Endothelial cell of umbilical vein (primary cell): ENCODE measurements at regions of chr13 and their contacts with region 1.

Region 1: DNA sequence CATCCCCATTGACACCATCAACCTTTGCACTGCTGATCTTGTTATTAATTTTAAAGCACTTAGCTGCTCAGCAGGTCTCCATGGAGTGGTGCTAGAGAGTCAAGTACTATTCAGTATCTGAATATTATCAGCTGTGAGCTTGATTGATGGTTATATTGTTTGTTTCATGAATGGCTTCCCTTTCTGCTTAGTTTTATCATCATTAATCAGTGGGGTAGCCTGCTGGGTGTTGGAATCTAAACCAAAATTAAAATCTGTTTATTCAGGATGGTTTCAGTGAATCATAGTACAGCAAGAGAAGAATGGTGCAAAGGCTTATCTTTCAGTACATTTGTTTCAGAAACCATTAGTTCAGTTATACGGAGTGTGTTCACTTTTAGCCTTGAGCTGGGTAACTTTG is 42.5 kb upstream of the SCEL start:
- DNase-seq: peak; percentile 96
- H3K4me3 ChIP-seq: no peak overlapping the region
- H3K27ac ChIP-seq: no peak overlapping the region
- H3K4me1 ChIP-seq: peaks cover 9% of the 10 kb centered on the region
- H3K27me3 ChIP-seq: peaks cover 2 to 12% of the 10 kb centered on the region in 2 experiments
- CTCF ChIP-seq: peak; percentile 44 to 60
- POLR2A ChIP-seq: peak; percentile 35

Region 2: DNA sequence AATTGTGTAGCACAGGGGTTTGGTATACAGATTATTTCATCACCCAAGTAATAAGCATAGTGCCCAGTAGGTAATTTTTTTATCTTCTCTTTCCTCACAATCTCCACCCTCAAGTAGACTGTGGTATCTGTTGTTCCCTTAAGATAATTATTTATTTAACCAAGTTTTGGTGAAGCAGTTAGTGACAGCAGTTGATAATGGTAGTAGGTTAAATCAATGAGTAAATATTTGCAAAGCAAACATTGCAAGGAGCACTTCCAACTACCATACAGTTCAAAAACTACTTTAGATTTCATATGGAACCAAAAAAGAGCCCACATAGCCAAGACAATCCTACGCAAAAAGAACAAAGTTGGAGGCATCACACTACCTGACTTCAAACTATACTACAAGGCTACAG is 898.5 kb before region 1 on chr13:
- CTCF ChIA-PET with region 1: no interaction called
- POLR2A ChIA-PET with region 1: no interaction called
- dilution Hi-C with region 1: no loop called
- intact Hi-C with region 1: no loop called
- DNase-seq: no peak
- H3K4me3 ChIP-seq: no peak overlapping the region
- H3K27ac ChIP-seq: no peak overlapping the region
- H3K4me1 ChIP-seq: no peaks in the 10 kb centered on the region
- H3K27me3 ChIP-seq: no peaks in the 10 kb centered on the region
- CTCF ChIP-seq: no peak
- POLR2A ChIP-seq: no peak

Region 3: GRCh38 chr13:77409412-77409811 is 83.6 kb before region 1 on chr13:
- CTCF ChIA-PET with region 1: no interaction called
- POLR2A ChIA-PET with region 1: no interaction called
- dilution Hi-C with region 1: no loop called
- intact Hi-C with region 1: no loop called
- DNase-seq: no peak
- H3K4me3 ChIP-seq: no peak overlapping the region
- H3K27ac ChIP-seq: no peak overlapping the region
- H3K4me1 ChIP-seq: no peaks in the 10 kb centered on the region
- H3K27me3 ChIP-seq: no peaks in the 10 kb centered on the region
- CTCF ChIP-seq: no peak
- POLR2A ChIP-seq: no peak

Region 4: DNA sequence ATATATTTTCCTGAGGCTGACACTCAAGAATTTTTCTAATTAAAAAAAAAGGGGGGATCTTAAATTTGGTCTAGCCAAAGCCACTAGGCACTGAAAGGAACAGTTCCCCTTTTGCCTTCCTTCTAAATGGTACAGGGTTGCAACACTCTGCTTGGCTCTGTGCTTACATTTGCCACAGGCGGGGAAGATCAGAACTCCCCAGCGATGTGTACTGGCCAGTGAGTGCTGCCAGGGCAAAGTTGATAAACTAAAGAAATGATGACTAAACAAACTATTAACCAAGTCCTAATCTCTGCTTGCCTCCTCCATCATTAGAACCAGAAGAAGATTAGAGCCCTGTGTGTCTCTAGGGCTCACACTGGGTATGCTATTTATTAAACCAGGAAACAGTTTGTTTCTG is 32.8 kb before region 1 on chr13:
- CTCF ChIA-PET with region 1: no interaction called
- POLR2A ChIA-PET with region 1: no interaction called
- dilution Hi-C with region 1: no loop called
- intact Hi-C with region 1: no loop called
- DNase-seq: no peak
- H3K4me3 ChIP-seq: no peak overlapping the region
- H3K27ac ChIP-seq: no peak overlapping the region
- H3K4me1 ChIP-seq: no peaks in the 10 kb centered on the region
- H3K27me3 ChIP-seq: peaks cover 2 to 3% of the 10 kb centered on the region in 2 experiments
- CTCF ChIP-seq: no peak
- POLR2A ChIP-seq: no peak

Region 5: DNA sequence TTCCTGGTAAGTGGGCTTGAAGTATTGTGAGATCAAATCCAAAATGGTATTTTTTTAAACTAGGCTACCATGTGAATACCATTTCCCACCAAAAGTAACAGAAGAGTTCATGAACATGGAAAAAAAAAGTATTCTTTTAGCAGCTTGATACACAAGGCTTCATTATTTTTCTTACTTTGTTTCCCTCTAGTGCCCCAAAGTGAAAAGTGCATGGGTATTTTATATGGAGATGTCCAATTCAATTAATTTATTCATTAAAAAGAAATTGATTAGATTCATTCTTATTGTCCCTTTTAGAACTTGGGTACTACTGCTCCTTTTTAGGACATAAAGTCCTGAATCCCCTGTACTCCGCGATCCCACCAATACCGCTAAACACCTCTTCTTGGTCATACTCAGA is 13.9 kb after region 1 on chr13:
- CTCF ChIA-PET with region 1: interaction called, 72 read pairs
- POLR2A ChIA-PET with region 1: no interaction called
- dilution Hi-C with region 1: no loop called
- intact Hi-C with region 1: loop called (anchors 1 kb)
- DNase-seq: peak; percentile 58
- H3K4me3 ChIP-seq: no peak overlapping the region
- H3K27ac ChIP-seq: no peak overlapping the region
- H3K4me1 ChIP-seq: peaks cover 29% of the 10 kb centered on the region
- H3K27me3 ChIP-seq: peaks cover 4 to 5% of the 10 kb centered on the region in 2 experiments
- CTCF ChIP-seq: peak; percentile 3 to 17
- POLR2A ChIP-seq: no peak

Region 6: DNA sequence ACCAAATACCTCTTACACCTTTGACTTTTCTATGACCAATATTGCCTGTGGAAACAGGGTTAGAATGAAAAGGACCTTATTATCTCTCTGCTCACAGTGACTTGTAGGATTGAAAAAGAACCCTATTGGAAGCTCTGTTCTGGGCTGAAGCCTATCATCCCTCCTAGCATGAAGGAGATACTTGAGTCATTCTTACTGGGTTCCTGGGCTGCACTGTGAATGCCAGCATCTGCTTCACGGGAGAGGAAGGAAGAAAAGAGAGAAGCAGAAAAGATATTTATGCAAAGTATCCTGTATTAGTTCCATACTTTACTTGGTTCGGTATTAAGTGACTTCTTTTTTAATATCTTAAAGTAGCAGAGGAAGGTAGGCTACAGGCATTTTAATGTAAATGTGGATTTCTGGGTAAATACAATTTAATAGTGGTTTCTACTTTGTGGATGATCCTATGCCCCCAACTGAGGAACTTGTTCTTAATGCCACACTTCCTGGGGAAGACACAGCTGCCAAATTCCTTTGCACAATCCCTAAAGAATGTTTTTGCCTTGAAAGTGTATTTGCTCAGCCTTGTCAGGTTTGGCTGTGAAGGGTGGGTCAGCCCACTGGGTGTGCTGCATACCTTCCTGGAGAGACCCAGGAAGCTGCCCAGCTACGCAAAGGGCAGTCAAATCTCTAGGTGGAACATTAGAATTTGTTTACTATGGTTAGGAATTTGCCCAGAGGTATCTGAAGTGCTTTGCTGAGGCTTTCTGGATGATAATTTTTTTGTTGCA is 28.8 kb after region 1 on chr13:
- CTCF ChIA-PET with region 1: interaction called, 18 read pairs
- POLR2A ChIA-PET with region 1: no interaction called
- dilution Hi-C with region 1: no loop called
- intact Hi-C with region 1: no loop called
- DNase-seq: peak; percentile 58
- H3K4me3 ChIP-seq: no peak overlapping the region
- H3K27ac ChIP-seq: peak overlapping the region; percentile 59
- H3K4me1 ChIP-seq: peaks cover 39% of the 10 kb centered on the region
- H3K27me3 ChIP-seq: no peaks in the 10 kb centered on the region
- CTCF ChIP-seq: no peak
- POLR2A ChIP-seq: no peak

Region 7: GRCh38 chr13:77554069-77554468 is 61.1 kb after region 1 on chr13:
- CTCF ChIA-PET with region 1: interaction called, 15 read pairs
- POLR2A ChIA-PET with region 1: no interaction called
- dilution Hi-C with region 1: no loop called
- intact Hi-C with region 1: no loop called
- DNase-seq: no peak
- H3K4me3 ChIP-seq: no peak overlapping the region
- H3K27ac ChIP-seq: no peak overlapping the region
- H3K4me1 ChIP-seq: no peaks in the 10 kb centered on the region
- H3K27me3 ChIP-seq: peaks cover 0 to 3% of the 10 kb centered on the region in 2 experiments
- CTCF ChIP-seq: no peak
- POLR2A ChIP-seq: no peak

Region 8: DNA sequence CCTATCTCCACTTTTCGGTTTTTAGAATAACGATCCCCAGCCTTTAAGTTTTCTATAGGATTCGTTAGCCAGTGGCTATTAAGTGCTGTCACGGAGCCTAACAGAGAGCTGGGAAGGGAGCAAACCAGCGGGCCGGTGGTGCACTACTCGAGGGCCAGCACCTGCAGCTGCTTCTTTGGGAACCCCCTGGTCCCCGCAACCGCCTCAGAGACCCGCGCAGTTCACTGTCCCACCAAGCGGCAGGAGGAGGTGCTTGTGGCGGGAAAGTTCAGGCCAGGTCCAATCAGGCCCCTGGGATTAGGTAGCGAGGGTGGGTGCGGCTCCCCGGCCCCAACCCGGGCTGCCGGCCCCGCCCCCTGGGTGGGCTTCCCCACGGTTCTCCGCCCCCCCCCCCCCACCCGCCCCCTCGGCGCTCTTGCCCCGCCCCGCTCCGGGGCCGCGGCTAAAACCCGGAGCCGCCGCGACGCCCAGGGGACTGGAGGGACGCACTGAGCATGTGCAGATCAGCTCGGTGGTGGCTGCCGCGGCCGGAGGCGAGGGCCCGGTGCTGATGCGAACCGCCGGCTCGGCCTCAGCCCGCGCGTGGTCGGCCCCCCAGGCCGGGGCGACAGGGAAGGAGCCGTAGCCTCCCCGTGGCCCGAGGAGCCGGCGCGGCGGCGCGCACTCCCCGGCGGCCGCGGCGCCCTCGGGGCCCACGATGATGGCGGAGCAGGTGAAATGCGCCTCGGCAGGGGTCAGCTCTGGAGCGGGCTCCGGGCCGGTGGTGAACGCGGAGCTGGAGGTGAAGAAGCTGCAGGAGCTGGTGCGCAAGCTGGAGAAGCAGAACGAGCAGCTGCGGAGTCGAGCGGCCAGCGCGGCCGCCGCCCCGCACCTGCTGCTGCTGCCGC is 204.5 kb after region 1 on chr13 and contains the start of gene SLAIN1:
- CTCF ChIA-PET with region 1: interaction called, 3 read pairs
- POLR2A ChIA-PET with region 1: no interaction called
- dilution Hi-C with region 1: no loop called
- intact Hi-C with region 1: loop called (anchors 5 kb)
- DNase-seq: peak; percentile 61
- H3K4me3 ChIP-seq: peak within 1 kb of the TSS; percentile 65 to 87 (median 75)
- H3K27ac ChIP-seq: no peak within 1 kb of the TSS
- H3K4me1 ChIP-seq: no peaks in the 10 kb centered on the region
- H3K27me3 ChIP-seq: peaks cover 7 to 26% of the 10 kb centered on the region in 2 experiments
- CTCF ChIP-seq: no peak
- POLR2A ChIP-seq: no peak
- total RNA-seq, gene SLAIN1: 4.3 and 4.5 TPM in 2 replicates